AG04449 (cell line): ENCODE measurements at regions of chr21 and their contacts with region 1.

Region 1: GRCh38 chr21:28943631-28944030 is 49.0 kb downstream of the LTN1 start:
- DNase-seq: no peak
- H3K4me3 ChIP-seq: no peak overlapping the region
- CTCF ChIP-seq: no peak

Region 2: DNA sequence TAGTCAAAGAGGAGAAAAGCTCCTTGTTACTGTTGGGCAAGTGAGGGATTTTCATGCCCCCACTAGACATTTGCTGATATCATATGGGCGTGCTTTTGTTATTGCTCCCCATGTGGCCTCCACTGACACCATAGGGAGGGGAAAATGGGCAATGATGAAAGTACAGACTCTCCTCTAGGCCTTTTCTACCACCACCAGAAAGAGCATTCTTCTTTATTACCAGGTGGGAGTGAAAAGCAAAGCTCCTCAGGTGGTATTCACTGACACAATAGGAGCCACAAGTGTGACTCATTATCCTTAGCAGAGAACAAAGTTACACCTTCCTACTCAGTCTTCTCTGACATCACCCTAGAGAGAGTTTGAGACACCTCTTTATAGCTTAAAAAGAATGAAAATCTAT is 618.0 kb before region 1 on chr21:
- CTCF ChIA-PET with region 1: no interaction called
- POLR2A ChIA-PET with region 1: no interaction called
- DNase-seq: no peak
- H3K4me3 ChIP-seq: no peak overlapping the region
- CTCF ChIP-seq: no peak

Region 3: DNA sequence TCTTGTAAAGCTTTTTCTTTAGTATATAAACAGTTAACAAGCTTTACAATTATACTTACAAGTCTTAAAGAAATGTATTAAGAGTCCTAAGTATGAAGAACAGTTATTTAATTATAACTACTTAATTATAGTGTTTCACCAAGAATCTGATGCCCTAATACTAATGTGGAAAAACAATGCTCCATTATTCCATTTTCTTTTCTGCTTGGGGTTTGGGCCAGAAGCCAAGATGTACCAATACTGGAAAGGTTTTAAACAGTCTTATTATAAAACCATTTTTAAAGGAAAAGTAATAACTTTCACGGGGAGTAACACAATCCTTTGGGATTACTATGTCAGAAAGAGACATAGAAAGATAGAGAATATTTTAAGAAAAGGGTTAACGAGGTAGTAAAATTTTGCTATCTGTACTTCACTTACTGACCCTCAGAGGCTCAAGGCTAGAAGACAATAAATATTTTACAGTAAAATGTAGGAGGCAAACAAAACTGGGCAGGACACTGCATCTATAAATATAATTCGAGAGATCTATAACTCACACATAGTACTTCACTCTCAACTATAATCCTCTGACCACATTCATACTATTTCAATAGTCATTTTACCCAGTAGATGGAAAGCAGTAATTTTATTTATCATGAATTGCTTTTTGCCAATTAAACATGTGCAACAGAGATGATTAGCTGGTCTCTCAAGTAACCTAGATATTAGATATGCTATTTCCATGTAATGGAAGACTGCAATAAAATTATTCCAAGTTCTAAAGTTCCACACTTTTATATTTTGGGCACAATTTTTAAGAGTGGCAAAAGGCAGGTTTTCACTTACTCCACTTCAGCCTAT is 14.8 kb before region 1 on chr21:
- CTCF ChIA-PET with region 1: interaction called, 16 read pairs
- POLR2A ChIA-PET with region 1: no interaction called
- DNase-seq: no peak
- H3K4me3 ChIP-seq: no peak overlapping the region
- CTCF ChIP-seq: no peak